CD4-positive, alpha-beta memory T cell (primary cell): ENCODE measurements at regions of chr9 and their contacts with region 1.

Region 1: GRCh38 chr9:71897577-71897976 is 13.4 kb downstream of the ABHD17B start:
- DNase-seq: peak in 4 of 5 donors; percentile 17 to 41 (median 37)
- H3K4me3 ChIP-seq: no peak overlapping the region
- H3K4me3 Mint-ChIP-seq: peak overlapping the region in 6 of 8 donors; percentile 35 to 64 (median 46)
- H3K27ac ChIP-seq: no peak overlapping the region
- H3K27ac Mint-ChIP-seq: peak overlapping the region in 6 of 7 donors; percentile 17 to 79 (median 36)
- H3K4me1 ChIP-seq: peaks cover 74% of the 10 kb centered on the region
- H3K4me1 Mint-ChIP-seq: peaks cover 45 to 76% (median 60%) of the 10 kb centered on the region in 4 donors
- H3K27me3 ChIP-seq: no peaks in the 10 kb centered on the region
- H3K27me3 Mint-ChIP-seq: no peaks in the 10 kb centered on the region

Region 2: GRCh38 chr9:71830929-71831328 is 66.6 kb before region 1 on chr9:
- CTCF ChIA-PET with region 1: no interaction called
- POLR2A ChIA-PET with region 1: no interaction called
- intact Hi-C with region 1: loop called (anchors 5 kb)
- DNase-seq: no peak
- H3K4me3 ChIP-seq: no peak overlapping the region
- H3K4me3 Mint-ChIP-seq: no peak overlapping the region
- H3K27ac ChIP-seq: no peak overlapping the region
- H3K27ac Mint-ChIP-seq: no peak overlapping the region
- H3K4me1 ChIP-seq: no peaks in the 10 kb centered on the region
- H3K4me1 Mint-ChIP-seq: no peaks in the 10 kb centered on the region
- H3K27me3 ChIP-seq: no peaks in the 10 kb centered on the region
- H3K27me3 Mint-ChIP-seq: no peaks in the 10 kb centered on the region

Region 3: DNA sequence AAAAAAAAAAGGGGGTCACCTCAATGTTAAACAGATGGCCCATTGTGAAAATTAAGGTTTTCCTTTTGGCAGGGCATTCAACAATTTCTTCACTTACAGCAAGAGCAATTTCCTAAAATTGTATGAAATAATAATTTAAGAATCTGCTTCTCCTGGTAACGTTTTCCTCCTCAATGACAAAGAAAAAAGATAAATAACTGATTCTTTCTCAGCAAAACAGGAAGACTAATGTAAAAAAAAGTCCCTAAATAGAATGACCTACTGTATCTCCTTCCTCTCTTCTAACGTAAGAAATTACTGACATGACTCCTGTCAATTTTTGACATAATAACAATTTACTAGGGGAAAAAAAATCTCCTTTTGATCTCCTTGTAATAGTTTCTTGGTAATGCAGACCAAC is 12.1 kb before region 1 on chr9:
- CTCF ChIA-PET with region 1: interaction called, 5 read pairs
- POLR2A ChIA-PET with region 1: interaction called, 7 read pairs
- intact Hi-C with region 1: loop called (anchors 2 kb)
- DNase-seq: no peak
- H3K4me3 ChIP-seq: no peak overlapping the region
- H3K4me3 Mint-ChIP-seq: peak overlapping the region in 1 of 8 donors; percentile 12
- H3K27ac ChIP-seq: no peak overlapping the region
- H3K27ac Mint-ChIP-seq: peak overlapping the region in 3 of 7 donors; percentile 3 to 29 (median 23)
- H3K4me1 ChIP-seq: peaks cover 22% of the 10 kb centered on the region
- H3K4me1 Mint-ChIP-seq: peaks cover 26 to 35% (median 33%) of the 10 kb centered on the region in 4 donors
- H3K27me3 ChIP-seq: no peaks in the 10 kb centered on the region
- H3K27me3 Mint-ChIP-seq: no peaks in the 10 kb centered on the region

Region 4: DNA sequence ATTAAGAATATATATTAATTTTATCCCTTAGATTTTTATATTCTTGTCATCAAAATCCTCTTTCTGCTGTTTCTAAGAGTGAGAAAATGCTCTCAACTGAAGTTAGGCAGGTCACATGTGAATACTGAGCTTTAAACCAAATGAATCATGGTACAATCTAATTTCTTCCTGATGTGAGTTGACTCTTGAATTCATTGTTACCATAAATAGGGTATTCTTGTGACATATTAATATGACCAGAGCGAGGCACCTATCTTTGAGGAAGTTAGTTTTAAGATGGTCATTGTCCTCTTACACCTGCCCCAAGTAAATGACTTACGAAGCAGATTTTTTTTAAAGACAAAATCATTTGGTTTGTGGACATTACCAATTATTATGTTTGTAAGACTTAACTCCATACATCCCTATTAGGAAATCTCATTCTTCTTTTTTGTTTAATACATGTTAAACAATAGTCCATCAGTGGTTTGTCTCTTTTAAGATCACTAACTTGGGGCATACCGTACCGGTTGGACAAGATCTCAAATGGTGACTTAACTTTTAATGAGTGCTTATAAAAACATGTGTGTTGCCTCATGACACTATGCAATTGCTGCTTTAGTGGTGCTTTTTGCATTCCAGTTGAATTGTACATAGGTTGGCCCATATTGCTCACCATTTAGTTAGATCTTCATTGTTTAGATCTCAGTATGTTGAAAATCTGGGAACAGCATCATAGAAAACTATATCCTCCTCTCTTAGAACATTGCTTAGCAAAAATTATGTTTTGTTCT is 31.4 kb after region 1 on chr9:
- CTCF ChIA-PET with region 1: no interaction called
- POLR2A ChIA-PET with region 1: no interaction called
- intact Hi-C with region 1: no loop called
- DNase-seq: no peak
- H3K4me3 ChIP-seq: no peak overlapping the region
- H3K4me3 Mint-ChIP-seq: no peak overlapping the region
- H3K27ac ChIP-seq: no peak overlapping the region
- H3K27ac Mint-ChIP-seq: no peak overlapping the region
- H3K4me1 ChIP-seq: no peaks in the 10 kb centered on the region
- H3K4me1 Mint-ChIP-seq: peaks cover 3 to 13% (median 6%) of the 10 kb centered on the region in 4 donors
- H3K27me3 ChIP-seq: no peaks in the 10 kb centered on the region
- H3K27me3 Mint-ChIP-seq: no peaks in the 10 kb centered on the region